Gastrocnemius medialis (tissue), 4 donors: ENCODE measurements at regions of chr6 and their contacts with region 1.

Region 1: DNA sequence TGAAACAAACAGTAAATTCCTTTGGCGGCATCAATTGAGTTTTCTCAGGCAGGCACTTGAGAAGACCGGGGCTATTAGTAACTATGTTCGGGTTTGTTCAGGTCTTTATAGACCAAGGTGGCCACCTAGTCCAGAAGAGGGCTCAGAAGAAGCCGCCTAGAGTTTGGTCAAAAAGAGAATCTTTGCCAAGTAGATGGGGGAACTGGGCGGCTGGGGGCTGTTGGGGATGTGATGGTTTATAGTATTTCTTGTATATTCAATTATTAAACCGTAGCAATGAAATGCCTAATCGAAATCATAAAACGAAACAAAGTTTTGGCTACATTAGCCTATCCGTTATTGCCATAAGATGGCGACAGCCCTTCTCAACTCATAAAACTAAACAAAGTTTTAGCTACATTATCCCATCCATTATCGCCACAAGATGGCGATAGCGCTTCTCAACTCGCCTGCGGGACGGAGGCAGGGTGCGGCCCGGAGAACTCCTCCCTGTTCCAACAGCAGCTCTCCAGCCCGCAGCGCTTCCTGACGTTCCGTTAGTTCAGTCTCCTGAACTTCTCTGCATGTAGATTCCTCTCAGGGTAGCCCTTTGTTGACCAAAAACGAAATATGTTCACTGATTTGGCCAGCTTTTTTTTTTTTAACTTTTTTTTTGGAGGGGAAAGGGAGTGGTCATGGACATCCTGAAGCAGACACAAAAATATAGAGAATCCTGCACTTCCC is 120.5 kb upstream of the PRSS16 start:
- DNase-seq: peak; percentile 68 to 73
- ATAC-seq: peak; percentile 82
- H3K4me3 ChIP-seq: peak overlapping the region; percentile 21 to 44 (median 36)
- H3K27ac ChIP-seq: peak overlapping the region in 2 of 4 donors; percentile 18 to 46
- H3K4me1 ChIP-seq: peaks cover under 1 to 4% of the 10 kb centered on the region in 2 donors
- H3K27me3 ChIP-seq: no peaks in the 10 kb centered on the region
- CTCF ChIP-seq: peak; percentile 37 to 85 (median 61)
- POLR2A ChIP-seq: no peak

Region 2: DNA sequence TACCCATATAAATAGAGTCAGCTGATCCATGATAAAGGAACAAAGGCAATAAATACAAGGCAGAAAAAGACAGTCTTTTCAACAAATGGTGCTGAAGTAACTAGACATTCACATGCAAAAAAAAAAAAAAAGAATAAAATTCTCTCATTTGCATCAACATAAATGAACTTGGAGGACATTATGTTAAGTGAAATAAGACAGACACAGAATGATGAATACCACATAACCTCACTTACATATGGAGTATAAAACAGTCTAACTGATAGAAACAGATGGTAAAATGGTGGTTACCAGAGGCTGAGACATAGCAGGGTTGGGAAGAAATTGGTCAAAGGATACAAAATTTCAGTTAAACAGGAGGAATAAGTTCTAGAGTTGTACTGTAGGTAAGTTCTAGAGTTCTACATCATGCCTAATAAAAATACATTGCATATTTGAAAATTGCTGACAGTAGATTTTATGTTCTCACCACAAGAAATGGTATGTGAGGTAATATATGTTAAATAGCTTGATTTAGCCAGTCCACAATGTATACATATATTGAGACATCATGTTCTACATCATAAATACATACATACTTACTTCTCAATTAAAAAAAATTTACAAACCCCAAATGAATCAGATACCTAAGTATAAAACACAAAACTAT is 475.7 kb before region 1 on chr6:
- in situ Hi-C with region 1: no loop called
- intact Hi-C with region 1: no loop called
- DNase-seq: no peak
- ATAC-seq: no peak
- H3K4me3 ChIP-seq: no peak overlapping the region
- H3K27ac ChIP-seq: no peak overlapping the region
- H3K4me1 ChIP-seq: no peaks in the 10 kb centered on the region
- H3K27me3 ChIP-seq: no peaks in the 10 kb centered on the region
- CTCF ChIP-seq: no peak
- POLR2A ChIP-seq: no peak

Region 3: GRCh38 chr6:27157459-27158315 is 30.7 kb after region 1 on chr6:
- in situ Hi-C with region 1: no loop called
- intact Hi-C with region 1: loop called (anchors 1 kb)
- DNase-seq: peak in 1 of 2 donors; percentile 30
- ATAC-seq: peak; percentile 30 to 60
- H3K4me3 ChIP-seq: peak overlapping the region; percentile 41 to 51 (median 44)
- H3K27ac ChIP-seq: no peak overlapping the region
- H3K4me1 ChIP-seq: peaks cover 0 to 8% of the 10 kb centered on the region in 2 donors
- H3K27me3 ChIP-seq: peaks cover 0 to 5% (median 0%) of the 10 kb centered on the region in 3 donors
- CTCF ChIP-seq: peak in 4 of 5 experiments; percentile 25 to 36 (median 32)
- POLR2A ChIP-seq: no peak